ENCODE measurements at regions of chr4 and their contacts with region 1.

Region 1: DNA sequence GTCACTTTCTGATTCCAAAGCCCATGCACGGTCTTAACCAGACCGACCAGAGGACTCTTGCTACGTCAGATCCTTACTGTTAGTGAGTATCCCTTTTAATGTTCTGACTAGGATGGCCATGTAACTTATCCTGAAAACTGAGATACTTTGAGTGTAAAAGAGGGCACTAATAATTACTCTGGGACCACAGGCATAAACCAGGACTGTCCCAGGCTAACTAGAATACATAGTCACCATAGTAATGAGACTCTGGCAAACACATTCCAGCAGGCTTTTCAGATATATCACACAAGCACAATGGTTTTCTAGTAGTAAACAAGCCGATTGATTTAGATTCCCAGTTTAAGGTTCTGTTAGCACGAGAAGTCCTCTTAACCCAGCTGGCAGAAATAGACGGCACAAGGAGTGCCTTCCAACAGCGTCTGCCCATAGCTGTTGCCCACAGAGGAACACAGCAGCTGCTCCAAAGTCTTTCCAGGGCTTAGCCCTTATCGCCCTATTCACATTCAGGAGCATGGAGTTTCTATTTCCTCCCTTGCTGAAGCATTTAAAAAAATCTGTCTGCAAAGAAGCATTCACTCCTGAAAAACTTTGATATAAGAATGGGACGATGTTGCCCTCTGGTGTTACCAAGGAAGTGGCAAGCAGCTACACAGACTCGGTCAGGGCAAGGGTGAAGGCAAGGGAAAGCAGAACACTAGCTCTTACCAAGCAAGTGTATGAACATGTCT is 92.4 kb downstream of the CXCL13 start:
- DNase-seq: peak in 1 of 2 experiments; percentile 24
- H3K4me3 ChIP-seq: no peak overlapping the region
- H3K4me3 Mint-ChIP-seq: no peak overlapping the region
- H3K27ac Mint-ChIP-seq: no peak overlapping the region
- H3K4me1 ChIP-seq: peaks cover 25% of the 10 kb centered on the region
- H3K4me1 Mint-ChIP-seq: peaks cover 7% of the 10 kb centered on the region
- H3K27me3 ChIP-seq: no peaks in the 10 kb centered on the region
- H3K27me3 Mint-ChIP-seq: no peaks in the 10 kb centered on the region
- CTCF ChIP-seq: no peak

Region 2: DNA sequence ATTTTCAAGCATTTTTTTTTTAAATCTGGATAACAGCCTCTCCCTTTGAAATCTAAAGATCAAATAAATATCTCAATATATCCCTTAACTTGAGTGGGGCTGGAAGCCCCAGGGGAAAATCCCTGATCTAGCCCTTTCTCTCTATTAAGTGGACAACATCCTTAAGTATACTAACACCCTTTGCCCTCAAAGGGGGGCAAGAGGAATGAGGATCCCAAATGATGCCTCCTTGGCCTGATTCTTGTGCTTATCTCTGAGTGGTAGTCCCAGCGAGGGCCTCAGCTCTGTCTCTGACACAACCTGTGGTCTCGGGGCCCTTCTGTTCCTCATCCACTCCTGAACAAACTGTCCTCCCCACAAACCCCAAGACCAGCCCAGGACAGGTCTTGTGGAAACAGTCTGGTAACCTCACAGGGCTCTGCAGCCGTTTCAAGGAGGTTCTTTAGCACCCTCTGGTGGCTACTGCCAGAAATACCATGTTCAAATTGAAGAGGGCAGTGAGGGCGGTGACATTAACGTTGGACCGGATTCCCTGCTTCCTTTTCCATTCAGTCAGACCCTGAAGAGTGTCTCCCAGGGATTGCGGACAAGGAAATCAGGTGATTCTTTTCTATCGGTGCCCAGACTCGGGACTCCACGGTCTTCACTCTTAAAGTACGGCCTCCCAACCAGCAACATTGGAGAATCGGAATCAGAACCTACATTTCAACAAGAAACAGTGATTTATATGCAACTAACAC is 79.5 kb before region 1 on chr4:
- CTCF ChIA-PET with region 1: no interaction called
- POLR2A ChIA-PET with region 1: no interaction called
- intact Hi-C with region 1: loop called (anchors 5 kb)
- DNase-seq: peak; percentile 65 to 73
- H3K4me3 ChIP-seq: no peak overlapping the region
- H3K4me3 Mint-ChIP-seq: no peak overlapping the region
- H3K27ac Mint-ChIP-seq: no peak overlapping the region
- H3K4me1 ChIP-seq: no peaks in the 10 kb centered on the region
- H3K4me1 Mint-ChIP-seq: no peaks in the 10 kb centered on the region
- H3K27me3 ChIP-seq: no peaks in the 10 kb centered on the region; the same call in 1 of the 2 replicates
- H3K27me3 Mint-ChIP-seq: peaks cover 7% of the 10 kb centered on the region
- CTCF ChIP-seq: peak; percentile 69 to 84

Region 3: GRCh38 chr4:77710059-77710458 is 12.0 kb after region 1 on chr4:
- CTCF ChIA-PET with region 1: no interaction called
- POLR2A ChIA-PET with region 1: no interaction called
- intact Hi-C with region 1: loop called (anchors 1 kb)
- DNase-seq: no peak
- H3K4me3 ChIP-seq: no peak overlapping the region
- H3K4me3 Mint-ChIP-seq: no peak overlapping the region
- H3K27ac Mint-ChIP-seq: no peak overlapping the region
- H3K4me1 ChIP-seq: no peaks in the 10 kb centered on the region
- H3K4me1 Mint-ChIP-seq: no peaks in the 10 kb centered on the region
- H3K27me3 ChIP-seq: no peaks in the 10 kb centered on the region
- H3K27me3 Mint-ChIP-seq: no peaks in the 10 kb centered on the region
- CTCF ChIP-seq: no peak

Region 4: DNA sequence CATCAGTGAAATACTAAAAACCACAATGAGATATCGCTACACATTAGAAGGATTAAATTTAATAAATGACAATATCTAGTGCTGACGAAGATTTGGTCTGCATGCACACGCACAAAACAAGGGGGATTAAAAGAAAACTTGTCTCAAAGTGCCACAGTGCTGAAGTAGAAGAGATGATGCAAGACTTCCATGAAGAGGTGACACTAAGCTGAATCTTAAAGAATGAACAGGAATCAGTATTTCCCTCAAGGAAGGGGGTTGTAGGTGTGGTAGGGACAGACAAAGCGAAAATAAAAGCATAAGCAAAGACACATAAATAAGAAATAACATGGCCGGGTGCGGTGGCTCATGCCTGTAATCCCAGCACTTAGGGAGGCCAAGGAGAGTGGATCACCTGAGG is 87.6 kb after region 1 on chr4:
- CTCF ChIA-PET with region 1: no interaction called
- POLR2A ChIA-PET with region 1: no interaction called
- intact Hi-C with region 1: no loop called
- DNase-seq: no peak
- H3K4me3 ChIP-seq: no peak overlapping the region
- H3K4me3 Mint-ChIP-seq: no peak overlapping the region
- H3K27ac Mint-ChIP-seq: no peak overlapping the region
- H3K4me1 ChIP-seq: peaks cover 9% of the 10 kb centered on the region
- H3K4me1 Mint-ChIP-seq: no peaks in the 10 kb centered on the region
- H3K27me3 ChIP-seq: no peaks in the 10 kb centered on the region
- H3K27me3 Mint-ChIP-seq: no peaks in the 10 kb centered on the region
- CTCF ChIP-seq: no peak

Region 5: GRCh38 chr4:77819843-77820648 is 122.0 kb after region 1 on chr4:
- CTCF ChIA-PET with region 1: interaction called, 3 read pairs
- POLR2A ChIA-PET with region 1: no interaction called
- intact Hi-C with region 1: loop called (anchors 1 kb)
- DNase-seq: peak; percentile 82 to 89
- H3K4me3 ChIP-seq: peak overlapping the region; percentile 93
- H3K4me3 Mint-ChIP-seq: peak overlapping the region; percentile 96
- H3K27ac Mint-ChIP-seq: peak overlapping the region; percentile 91
- H3K4me1 ChIP-seq: peaks cover 7% of the 10 kb centered on the region
- H3K4me1 Mint-ChIP-seq: no peaks in the 10 kb centered on the region
- H3K27me3 ChIP-seq: no peaks in the 10 kb centered on the region
- H3K27me3 Mint-ChIP-seq: peaks cover 5% of the 10 kb centered on the region
- CTCF ChIP-seq: no peak

Region 6: DNA sequence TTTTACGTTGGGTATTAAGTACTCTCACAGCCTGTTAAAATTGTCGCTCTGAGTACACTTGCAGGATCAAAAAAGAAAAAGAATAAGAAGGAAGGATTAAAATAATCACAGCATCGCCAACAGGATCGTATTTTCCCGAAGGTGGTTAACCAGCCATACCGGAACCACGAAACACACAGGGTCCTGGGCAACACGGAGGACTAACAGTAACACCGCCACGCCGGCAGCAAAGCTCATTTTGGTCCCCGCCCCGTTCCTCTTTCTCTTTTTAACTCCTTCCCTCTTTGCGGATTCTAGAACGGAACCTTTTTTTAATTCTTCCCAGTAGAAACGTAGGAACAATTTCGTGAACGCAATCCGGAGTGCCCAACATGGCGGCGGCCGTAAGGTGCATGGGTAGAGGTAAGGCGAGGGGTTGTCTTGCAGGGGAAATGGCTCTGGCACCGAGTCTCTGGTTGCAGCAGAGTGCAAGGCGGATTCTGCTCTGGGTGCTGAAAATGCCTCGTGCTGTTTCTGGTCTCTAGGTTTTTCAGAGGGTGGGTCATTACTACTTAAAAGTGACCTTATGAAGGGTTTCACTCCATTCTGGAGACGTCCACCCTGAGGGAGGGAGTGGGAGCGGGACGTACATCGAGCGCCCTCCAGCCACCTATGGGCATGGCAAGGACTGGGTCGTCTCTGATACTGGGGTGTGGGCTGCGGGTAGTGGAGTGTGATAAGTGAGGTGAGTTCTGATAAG is 164.6 kb after region 1 on chr4 and contains the start of gene MRPL1:
- CTCF ChIA-PET with region 1: no interaction called
- POLR2A ChIA-PET with region 1: no interaction called
- intact Hi-C with region 1: loop called (anchors 5 kb)
- DNase-seq: peak; percentile 88 to 89
- H3K4me3 ChIP-seq: peak within 1 kb of the TSS; percentile 37
- H3K4me3 Mint-ChIP-seq: peak within 1 kb of the TSS; percentile 80
- H3K27ac Mint-ChIP-seq: peak within 1 kb of the TSS; percentile 86
- H3K4me1 ChIP-seq: no peaks in the 10 kb centered on the region
- H3K4me1 Mint-ChIP-seq: peaks cover 6% of the 10 kb centered on the region
- H3K27me3 ChIP-seq: no peaks in the 10 kb centered on the region
- H3K27me3 Mint-ChIP-seq: no peaks in the 10 kb centered on the region
- CTCF ChIP-seq: no peak
- total RNA-seq, gene MRPL1: 38.4 and 42.0 TPM in 2 replicates

Measured in Caco-2 (cell line).